Mucosa of descending colon (tissue), 3 donors: ENCODE measurements at regions of chr17 and their contacts with region 1.

Region 1: GRCh38 chr17:39281806-39282205 is 56.1 kb upstream of the STAC2 start:
- DNase-seq: no peak
- ATAC-seq: no peak
- H3K4me3 ChIP-seq: no peak overlapping the region
- H3K4me1 ChIP-seq: no peaks in the 10 kb centered on the region
- CTCF ChIP-seq: no peak

Region 2: DNA sequence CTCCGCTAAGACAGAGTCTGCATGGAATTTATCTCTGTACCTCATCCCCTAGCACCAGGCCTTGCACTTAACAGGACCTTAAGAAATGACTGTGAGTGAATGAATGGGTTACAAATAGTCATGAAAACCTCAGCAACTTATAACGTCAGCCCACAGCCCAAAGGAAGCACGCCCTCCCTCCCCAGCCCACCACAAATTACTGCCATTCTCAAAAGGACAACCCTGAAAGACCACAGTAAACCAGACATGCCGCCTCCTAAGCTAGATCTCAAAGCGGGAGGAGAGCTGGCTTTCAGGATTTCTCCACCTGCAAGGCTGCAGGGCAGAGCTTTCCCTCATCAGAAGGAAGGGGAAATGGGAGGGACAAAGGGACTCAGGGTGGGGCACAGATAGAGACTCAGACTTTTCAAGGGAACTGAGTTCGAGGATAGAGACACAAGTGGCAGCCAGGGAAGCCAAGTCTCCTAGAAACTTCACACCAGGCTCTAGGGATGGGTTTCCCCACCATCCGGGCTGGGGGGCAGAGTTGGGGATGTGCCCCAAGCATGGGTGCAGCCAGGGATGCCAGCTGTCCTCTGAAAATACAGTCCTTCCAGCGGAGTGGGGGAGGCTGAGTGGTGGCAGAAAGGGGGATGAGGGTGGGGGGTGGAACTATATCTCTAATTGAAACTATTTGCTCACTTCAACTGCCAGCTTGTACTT is 187.0 kb before region 1 on chr17:
- intact Hi-C with region 1: no loop called
- DNase-seq: peak in 1 of 3 donors; percentile 29
- ATAC-seq: peak; percentile 35
- H3K4me3 ChIP-seq: no peak overlapping the region
- H3K4me1 ChIP-seq: peaks cover 3% of the 10 kb centered on the region
- CTCF ChIP-seq: no peak

Region 3: GRCh38 chr17:39401412-39402243 is 119.8 kb after region 1 on chr17 and contains the start of gene FBXL20:
- intact Hi-C with region 1: loop called in 1 of 2 experiments (anchors 10 kb)
- DNase-seq: peak; percentile 95 to 98 (median 98)
- ATAC-seq: peak; percentile 93
- H3K4me3 ChIP-seq: peak within 1 kb of the TSS; percentile 86
- H3K4me1 ChIP-seq: peaks cover 17% of the 10 kb centered on the region
- CTCF ChIP-seq: no peak
- total RNA-seq, gene FBXL20: 16.6 to 29.2 (median 28.9) TPM